SK-MEL-5 (cell line): ENCODE measurements at regions of chr1 and their contacts with region 1.

Region 1: DNA sequence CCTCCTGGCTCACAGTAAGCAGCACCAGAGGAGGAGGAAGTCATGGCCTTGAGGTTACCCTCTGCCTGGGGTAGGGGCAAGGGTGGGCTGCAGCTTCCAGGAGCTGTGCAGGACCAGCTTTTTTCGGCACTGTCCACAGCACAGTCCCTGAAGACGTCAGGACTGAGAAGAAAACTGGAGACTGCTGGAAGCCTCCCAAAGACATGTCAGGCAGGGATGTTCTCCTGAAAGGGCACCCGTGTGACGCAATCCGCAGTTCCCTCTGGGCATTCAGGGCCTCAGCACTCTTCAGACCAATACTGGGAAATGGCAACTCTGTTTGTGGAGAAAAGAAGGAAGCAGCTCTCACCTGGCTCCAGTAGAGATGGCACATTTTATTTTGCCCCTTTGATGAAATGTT is 64.8 kb upstream of the TENT5C start:
- DNase-seq: peak; percentile 60

Region 2: GRCh38 chr1:117664314-117664713 is 123.3 kb after region 1 on chr1:
- in situ Hi-C with region 1: loop called (anchors 10 kb)
- DNase-seq: no peak